CD8-positive, alpha-beta T cell (primary cell): ENCODE measurements at regions of chr18 and their contacts with region 1.

Region 1: DNA sequence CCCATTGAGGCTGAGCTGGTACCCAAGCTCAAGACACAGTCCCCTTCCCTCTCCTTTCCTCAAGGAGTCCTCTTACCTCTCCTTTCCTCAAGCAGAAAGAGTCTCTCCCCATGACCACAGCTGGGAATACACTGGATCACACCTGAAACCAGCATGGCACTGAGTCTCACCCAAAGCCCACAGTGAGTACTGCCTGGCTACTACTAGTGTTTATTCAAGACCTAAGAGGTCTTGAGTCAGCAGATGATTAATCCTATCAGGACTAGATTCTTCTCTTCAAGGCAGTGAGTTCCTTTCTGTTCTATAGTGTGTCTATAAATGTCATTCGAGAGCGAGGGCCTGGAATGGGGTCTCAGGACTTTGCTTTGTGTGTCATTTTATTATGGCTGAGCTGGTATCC is 111.4 kb downstream of the METTL4 start:
- DNase-seq: no peak
- ATAC-seq: no peak
- H3K4me3 ChIP-seq: no peak overlapping the region
- H3K4me3 Mint-ChIP-seq: no peak overlapping the region
- H3K27ac ChIP-seq: no peak overlapping the region
- H3K27ac Mint-ChIP-seq: no peak overlapping the region
- H3K4me1 ChIP-seq: no peaks in the 10 kb centered on the region
- H3K4me1 Mint-ChIP-seq: no peaks in the 10 kb centered on the region
- H3K27me3 ChIP-seq: no peaks in the 10 kb centered on the region
- H3K27me3 Mint-ChIP-seq: peaks cover 3% of the 10 kb centered on the region
- CTCF ChIP-seq: no peak

Region 2: DNA sequence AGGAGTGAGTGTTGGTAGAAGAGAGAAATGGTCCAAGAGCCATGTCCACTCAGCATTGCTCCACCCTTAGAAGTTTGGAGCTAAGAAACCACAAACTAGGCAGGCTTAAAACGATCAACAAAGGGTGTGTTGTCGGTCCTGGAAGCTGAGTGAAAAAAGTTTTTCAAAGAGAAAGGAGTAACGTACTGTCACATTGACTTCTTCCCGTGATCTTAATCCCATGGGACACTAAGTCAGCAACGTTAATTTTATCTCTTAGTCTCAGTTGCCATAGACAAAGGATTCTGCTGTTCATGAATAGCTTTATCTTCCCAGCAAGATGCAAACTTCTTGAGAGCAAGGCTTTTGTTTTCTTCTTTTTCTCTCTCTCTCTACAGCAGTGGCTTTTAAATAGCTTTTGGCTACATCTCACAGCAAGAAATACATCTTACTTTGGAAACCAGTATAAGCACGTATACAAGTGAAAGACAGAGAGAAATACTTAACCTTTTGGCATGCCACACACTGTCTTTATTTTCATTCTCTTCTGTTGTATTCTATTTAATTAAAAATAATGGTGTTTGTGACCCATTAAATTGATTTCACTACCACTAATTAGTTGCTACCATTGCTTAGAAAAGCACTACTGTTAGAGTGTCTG is 1367.5 kb after region 1 on chr18:
- CTCF ChIA-PET with region 1: no interaction called
- POLR2A ChIA-PET with region 1: no interaction called
- intact Hi-C with region 1: loop called in 1 of 2 experiments (anchors 5 kb)
- DNase-seq: no peak
- ATAC-seq: no peak
- H3K4me3 ChIP-seq: no peak overlapping the region
- H3K4me3 Mint-ChIP-seq: no peak overlapping the region
- H3K27ac ChIP-seq: no peak overlapping the region
- H3K27ac Mint-ChIP-seq: no peak overlapping the region
- H3K4me1 ChIP-seq: no peaks in the 10 kb centered on the region
- H3K4me1 Mint-ChIP-seq: no peaks in the 10 kb centered on the region
- H3K27me3 ChIP-seq: no peaks in the 10 kb centered on the region
- H3K27me3 Mint-ChIP-seq: no peaks in the 10 kb centered on the region
- CTCF ChIP-seq: no peak